ENCODE measurements at regions of chr4 and their contacts with region 1.

Region 1: GRCh38 chr4:83252782-83253405 is 31.7 kb downstream of the COQ2 start:
- DNase-seq: peak in 4 of 5 donors; percentile 45 to 59 (median 49)
- ATAC-seq: peak in 3 of 4 donors; percentile 49 to 58 (median 53)
- H3K4me3 ChIP-seq: no peak overlapping the region
- H3K27ac ChIP-seq: no peak overlapping the region
- H3K4me1 ChIP-seq: peaks cover 0 to 30% (median 0%) of the 10 kb centered on the region in 12 donors
- H3K27me3 ChIP-seq: no peaks in the 10 kb centered on the region
- CTCF ChIP-seq: peak; percentile 24 to 72 (median 46)
- POLR2A ChIP-seq: no peak

Region 2: GRCh38 chr4:83074086-83074704 is 178.7 kb before region 1 on chr4:
- intact Hi-C with region 1: loop called in 4 of 10 experiments (anchors 2 to 5 kb)
- DNase-seq: peak in 2 of 5 donors; percentile 12 to 23
- ATAC-seq: peak in 1 of 4 donors; percentile 54
- H3K4me3 ChIP-seq: no peak overlapping the region
- H3K27ac ChIP-seq: no peak overlapping the region
- H3K4me1 ChIP-seq: peaks cover 0 to 13% (median 0%) of the 10 kb centered on the region in 12 donors
- H3K27me3 ChIP-seq: no peaks in the 10 kb centered on the region
- CTCF ChIP-seq: peak; percentile 53 to 79 (median 69)
- POLR2A ChIP-seq: no peak

Region 3: DNA sequence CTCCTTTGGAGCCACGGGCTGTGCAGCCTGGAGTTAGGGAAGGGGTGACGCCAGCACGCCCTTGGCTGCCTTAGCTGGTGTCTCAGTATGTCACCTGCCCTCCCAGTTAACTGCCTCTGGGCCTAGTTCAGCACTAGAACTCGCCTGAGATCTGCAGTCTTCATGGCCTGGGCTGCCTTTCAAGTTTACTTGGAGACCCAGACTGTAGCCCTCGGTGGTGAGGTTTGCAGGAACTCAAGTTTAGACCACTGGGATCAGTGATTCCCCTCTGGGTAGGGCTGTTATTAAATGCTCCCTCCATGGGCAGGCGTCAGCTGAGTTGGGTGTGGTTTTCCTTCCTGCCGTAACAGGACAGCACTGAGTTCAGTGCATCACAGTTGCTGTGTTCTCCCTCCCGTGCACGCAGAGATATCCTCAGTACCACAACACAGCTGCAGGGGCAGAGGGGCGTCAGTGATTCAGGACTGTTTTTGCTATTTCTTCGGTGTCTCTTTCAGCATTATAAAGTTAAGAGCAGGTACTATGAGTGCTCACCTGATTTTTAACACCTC is 168.9 kb before region 1 on chr4:
- intact Hi-C with region 1: loop called in 3 of 10 experiments (anchors 2 to 5 kb)
- DNase-seq: peak in 1 of 5 donors; percentile 31
- ATAC-seq: peak in 3 of 4 donors; percentile 59 to 81 (median 81)
- H3K4me3 ChIP-seq: no peak overlapping the region
- H3K27ac ChIP-seq: peak overlapping the region in 1 of 12 donors; percentile 46
- H3K4me1 ChIP-seq: peaks cover 0 to 10% (median 0%) of the 10 kb centered on the region in 12 donors
- H3K27me3 ChIP-seq: no peaks in the 10 kb centered on the region
- CTCF ChIP-seq: peak in 2 of 12 donors; percentile 6 to 15
- POLR2A ChIP-seq: no peak

Region 4: GRCh38 chr4:83334425-83335241 is 81.7 kb after region 1 on chr4 and contains the start of gene HPSE:
- intact Hi-C with region 1: no loop called
- DNase-seq: peak; percentile 64 to 90 (median 80)
- ATAC-seq: peak; percentile 75 to 95 (median 92)
- H3K4me3 ChIP-seq: peak within 1 kb of the TSS in 11 of 12 donors; percentile 21 to 74 (median 47)
- H3K27ac ChIP-seq: peak within 1 kb of the TSS in 1 of 12 donors; percentile 71
- H3K4me1 ChIP-seq: peaks cover 0 to 36% (median 7%) of the 10 kb centered on the region in 12 donors
- H3K27me3 ChIP-seq: peaks cover 0 to 41% (median 7%) of the 10 kb centered on the region in 9 donors
- CTCF ChIP-seq: no peak
- POLR2A ChIP-seq: no peak
- total RNA-seq, gene HPSE: 0.38 to 6.2 (median 0.75) TPM

Measured in heart left ventricle (tissue), 16 donors.